Naive thymus-derived CD4-positive, alpha-beta T cell (primary cell): ENCODE measurements at regions of chr1 and their contacts with region 1.

Region 1: GRCh38 chr1:45583264-45583665 is 576 bp upstream of the NASP start:
- DNase-seq: peak; percentile 77 to 97 (median 95)
- ATAC-seq: peak; percentile 86
- H3K4me3 ChIP-seq: peak overlapping the region; percentile 98
- H3K4me3 Mint-ChIP-seq: peak overlapping the region; percentile 89 to 100 (median 99)
- H3K27ac ChIP-seq: peak overlapping the region; percentile 91
- H3K27ac Mint-ChIP-seq: peak overlapping the region; percentile 91 to 99 (median 98)
- H3K4me1 ChIP-seq: peaks cover 16 to 18% of the 10 kb centered on the region in 2 donors
- H3K4me1 Mint-ChIP-seq: peaks cover 20 to 37% (median 26%) of the 10 kb centered on the region in 7 donors
- H3K27me3 ChIP-seq: no peaks in the 10 kb centered on the region
- H3K27me3 Mint-ChIP-seq: no peaks in the 10 kb centered on the region

Region 2: GRCh38 chr1:44674113-44675000 is 908.9 kb before region 1 on chr1 and contains the starts of genes ARMH1 and TMEM53:
- CTCF ChIA-PET with region 1: no interaction called
- POLR2A ChIA-PET with region 1: no interaction called
- intact Hi-C with region 1: loop called in 1 of 2 experiments (anchors 1 kb)
- DNase-seq: peak; percentile 91 to 96 (median 95)
- ATAC-seq: peak; percentile 94
- H3K4me3 ChIP-seq: peak within 1 kb of the TSS; percentile 81
- H3K4me3 Mint-ChIP-seq: peak within 1 kb of the TSS; percentile 83 to 94 (median 91)
- H3K27ac ChIP-seq: peak within 1 kb of the TSS; percentile 76
- H3K27ac Mint-ChIP-seq: peak within 1 kb of the TSS; percentile 84 to 94 (median 91)
- H3K4me1 ChIP-seq: peaks cover 0 to 6% of the 10 kb centered on the region in 2 donors
- H3K4me1 Mint-ChIP-seq: peaks cover 13 to 34% (median 23%) of the 10 kb centered on the region in 7 donors
- H3K27me3 ChIP-seq: no peaks in the 10 kb centered on the region
- H3K27me3 Mint-ChIP-seq: no peaks in the 10 kb centered on the region
- total RNA-seq, gene ARMH1: 65.8 to 205 (median 87.0) TPM
- total RNA-seq, gene TMEM53: 1.6 to 3.5 (median 1.9) TPM

Region 3: DNA sequence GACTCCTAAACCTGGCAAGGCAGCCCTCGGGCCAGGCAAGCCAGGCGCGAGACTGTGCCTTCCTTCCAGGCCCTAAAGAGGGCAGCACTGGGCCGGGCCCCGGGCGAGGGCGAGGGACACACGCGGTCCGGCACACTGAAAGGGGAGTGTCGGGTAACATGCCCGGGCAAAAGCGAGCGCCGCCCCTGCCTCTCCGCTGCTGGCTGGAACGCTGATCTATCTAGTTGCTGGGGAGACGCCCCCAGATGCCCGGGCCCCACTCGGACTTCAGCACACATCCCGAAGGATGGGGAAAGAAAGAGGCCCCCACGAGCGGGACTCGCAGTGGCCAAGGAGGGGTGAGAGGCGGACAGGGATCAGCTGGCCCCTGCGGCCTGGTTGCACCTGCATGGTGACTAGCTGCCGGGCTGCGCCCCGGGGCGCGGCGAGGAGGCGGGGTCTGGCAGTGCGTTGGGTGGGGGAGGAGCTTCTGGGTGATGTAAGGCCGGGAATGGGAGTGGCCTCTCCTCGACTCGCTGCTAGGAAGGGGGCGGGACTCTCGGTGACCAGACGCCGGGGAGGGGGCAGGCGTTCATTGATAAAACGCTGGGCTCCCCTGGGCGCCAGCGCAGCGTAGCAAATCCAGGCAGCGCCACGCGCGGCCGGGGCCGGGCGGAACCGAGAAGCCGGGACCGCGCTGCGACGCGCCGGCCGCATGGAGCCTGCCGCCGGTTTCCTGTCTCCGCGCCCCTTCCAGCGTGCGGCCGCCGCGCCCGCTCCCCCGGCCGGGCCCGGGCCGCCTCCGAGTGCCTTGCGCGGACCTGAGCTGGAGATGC is 783.3 kb before region 1 on chr1 and contains the start of gene PLK3:
- CTCF ChIA-PET with region 1: interaction called, 3 read pairs
- POLR2A ChIA-PET with region 1: interaction called, 3 read pairs
- intact Hi-C with region 1: loop called (anchors 2 to 5 kb)
- DNase-seq: peak; percentile 93 to 99 (median 98)
- ATAC-seq: peak; percentile 92
- H3K4me3 ChIP-seq: peak within 1 kb of the TSS; percentile 66
- H3K4me3 Mint-ChIP-seq: peak within 1 kb of the TSS; percentile 85 to 98 (median 93)
- H3K27ac ChIP-seq: peak within 1 kb of the TSS; percentile 94
- H3K27ac Mint-ChIP-seq: peak within 1 kb of the TSS; percentile 84 to 99 (median 98)
- H3K4me1 ChIP-seq: peaks cover 17 to 24% of the 10 kb centered on the region in 2 donors
- H3K4me1 Mint-ChIP-seq: peaks cover 19 to 43% (median 33%) of the 10 kb centered on the region in 7 donors
- H3K27me3 ChIP-seq: no peaks in the 10 kb centered on the region
- H3K27me3 Mint-ChIP-seq: no peaks in the 10 kb centered on the region
- total RNA-seq, gene PLK3: 92.8 to 456 (median 142) TPM

Region 4: DNA sequence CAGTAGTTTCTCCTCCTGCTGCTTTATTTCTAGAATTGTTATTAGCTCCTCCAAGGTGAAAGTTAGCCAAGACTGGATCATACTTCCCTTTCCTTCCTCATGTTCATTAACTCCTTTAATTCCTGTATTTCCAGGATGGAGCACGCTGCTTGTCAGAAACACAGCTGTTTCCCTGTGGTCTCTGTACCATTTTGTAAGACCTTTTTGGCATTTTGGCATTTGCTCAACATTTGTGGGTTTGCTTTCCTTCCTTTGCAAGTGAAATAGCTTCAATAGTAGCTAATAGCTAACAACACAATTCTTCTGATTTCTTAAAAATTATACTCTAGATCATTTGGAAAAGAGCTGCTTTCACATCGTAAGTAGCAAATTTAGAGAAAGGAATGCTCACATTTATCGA is 300.9 kb before region 1 on chr1:
- CTCF ChIA-PET with region 1: no interaction called
- POLR2A ChIA-PET with region 1: no interaction called
- intact Hi-C with region 1: no loop called
- DNase-seq: no peak
- ATAC-seq: no peak
- H3K4me3 ChIP-seq: no peak overlapping the region
- H3K4me3 Mint-ChIP-seq: no peak overlapping the region
- H3K27ac ChIP-seq: no peak overlapping the region
- H3K27ac Mint-ChIP-seq: peak overlapping the region in 1 of 9 donors; percentile 35
- H3K4me1 ChIP-seq: no peaks in the 10 kb centered on the region
- H3K4me1 Mint-ChIP-seq: peaks cover 0 to 7% (median 0%) of the 10 kb centered on the region in 7 donors
- H3K27me3 ChIP-seq: no peaks in the 10 kb centered on the region
- H3K27me3 Mint-ChIP-seq: peaks cover 0 to 14% (median 4%) of the 10 kb centered on the region in 5 donors

Region 5: DNA sequence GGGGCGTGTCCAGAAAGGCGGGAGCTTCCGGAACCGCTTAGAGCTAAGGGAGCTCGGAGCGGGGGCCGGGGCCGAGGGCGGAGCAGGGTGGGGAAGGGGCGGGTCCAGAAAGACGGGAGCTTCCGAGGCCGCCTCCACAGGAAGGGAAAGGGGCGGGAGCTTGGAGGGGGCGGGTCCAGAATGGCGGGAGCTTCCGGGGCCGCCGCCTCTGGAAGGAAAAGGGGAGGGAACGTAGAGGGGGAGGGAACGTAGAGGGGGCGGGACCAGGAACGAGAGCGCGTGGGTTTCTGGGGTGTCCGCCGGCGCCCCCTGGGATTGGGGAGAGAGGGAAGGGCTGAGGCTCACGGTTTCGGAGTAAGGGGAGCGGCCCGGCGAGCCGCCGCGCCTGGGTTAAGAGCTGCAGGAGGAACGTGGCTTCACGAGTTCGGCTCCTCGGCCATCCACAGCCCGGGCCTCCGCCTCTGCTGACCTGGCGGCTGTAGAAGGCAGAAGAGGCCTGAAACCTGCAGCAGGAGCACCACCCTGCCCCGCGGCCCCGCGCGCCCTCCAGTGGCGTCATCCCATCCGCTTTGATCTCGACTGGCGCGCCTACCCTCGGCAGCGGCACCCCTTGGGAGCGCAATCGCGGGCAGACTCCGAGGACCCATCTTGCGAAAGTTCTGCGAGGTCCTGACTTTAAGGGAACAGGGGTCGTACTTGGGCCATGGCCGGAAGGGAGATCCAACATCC is 279.5 kb before region 1 on chr1:
- CTCF ChIA-PET with region 1: no interaction called
- POLR2A ChIA-PET with region 1: interaction called, 3 read pairs
- intact Hi-C with region 1: loop called (anchors 1 kb)
- DNase-seq: peak; percentile 86 to 96 (median 93)
- ATAC-seq: peak; percentile 94
- H3K4me3 ChIP-seq: peak overlapping the region; percentile 95
- H3K4me3 Mint-ChIP-seq: peak overlapping the region; percentile 89 to 96 (median 92)
- H3K27ac ChIP-seq: peak overlapping the region; percentile 88
- H3K27ac Mint-ChIP-seq: peak overlapping the region; percentile 90 to 97 (median 95)
- H3K4me1 ChIP-seq: peaks cover 7 to 9% of the 10 kb centered on the region in 2 donors
- H3K4me1 Mint-ChIP-seq: peaks cover 6 to 32% (median 26%) of the 10 kb centered on the region in 7 donors
- H3K27me3 ChIP-seq: no peaks in the 10 kb centered on the region
- H3K27me3 Mint-ChIP-seq: no peaks in the 10 kb centered on the region

Region 6: DNA sequence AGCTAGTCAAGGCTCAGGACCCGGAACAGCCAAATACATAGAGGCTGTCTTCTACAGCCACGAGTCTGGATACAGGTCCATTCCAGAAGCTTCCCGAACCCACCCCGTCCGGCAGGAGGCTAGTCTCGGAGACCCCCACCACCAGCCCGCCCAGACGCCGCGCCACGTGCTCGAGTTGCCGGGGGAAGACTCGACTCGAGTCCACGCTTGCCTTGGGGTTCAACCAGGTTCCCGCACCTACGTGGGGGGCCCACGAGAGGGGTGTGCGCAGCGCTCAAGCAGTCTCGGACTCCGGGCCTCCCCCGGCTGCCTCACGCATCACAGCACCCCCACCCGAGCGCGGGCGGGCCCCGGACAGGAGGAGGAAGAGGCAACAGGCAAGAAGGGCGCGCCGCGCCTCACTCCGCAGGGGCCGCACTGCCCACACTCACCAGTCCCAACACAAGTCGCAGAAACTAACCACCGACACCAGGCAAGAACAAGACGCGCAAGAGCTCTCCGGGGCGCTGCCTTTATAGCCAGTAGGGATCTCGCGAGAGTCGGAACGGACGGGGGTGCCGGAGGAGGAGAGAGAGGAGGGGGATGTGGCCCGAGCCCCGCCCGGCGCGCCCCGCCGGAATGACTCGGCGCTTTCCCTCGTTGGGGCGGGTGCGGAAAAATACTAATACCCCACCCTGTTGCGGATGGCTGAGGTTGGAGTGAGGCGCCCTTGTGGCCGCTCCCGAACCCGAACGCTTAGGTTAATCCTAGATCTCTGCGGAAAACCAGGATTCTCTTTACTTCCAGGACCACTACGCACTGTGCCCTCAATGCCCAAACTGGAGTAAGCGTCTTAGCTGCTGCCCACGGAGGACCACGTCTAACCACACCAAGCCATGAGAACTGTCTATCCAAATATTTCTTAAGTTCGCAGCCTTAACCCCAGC is 61.6 kb before region 1 on chr1 and contains the start of gene PRDX1:
- CTCF ChIA-PET with region 1: no interaction called
- POLR2A ChIA-PET with region 1: interaction called, 33 read pairs
- intact Hi-C with region 1: loop called (anchors 1 kb)
- DNase-seq: peak; percentile 91 to 99 (median 93)
- ATAC-seq: peak; percentile 95
- H3K4me3 ChIP-seq: peak within 1 kb of the TSS; percentile 94
- H3K4me3 Mint-ChIP-seq: peak within 1 kb of the TSS; percentile 90 to 99 (median 94)
- H3K27ac ChIP-seq: peak within 1 kb of the TSS; percentile 87
- H3K27ac Mint-ChIP-seq: peak within 1 kb of the TSS; percentile 83 to 96 (median 91)
- H3K4me1 ChIP-seq: peaks cover 7 to 8% of the 10 kb centered on the region in 2 donors
- H3K4me1 Mint-ChIP-seq: peaks cover 14 to 56% (median 32%) of the 10 kb centered on the region in 7 donors
- H3K27me3 ChIP-seq: no peaks in the 10 kb centered on the region
- H3K27me3 Mint-ChIP-seq: peaks cover 0 to 12% (median 0%) of the 10 kb centered on the region in 5 donors
- total RNA-seq, gene PRDX1: 28.8 to 369 (median 96.3) TPM

Region 7: GRCh38 chr1:45803301-45803780 is 220.1 kb after region 1 on chr1 and contains the start of gene MAST2:
- CTCF ChIA-PET with region 1: no interaction called
- POLR2A ChIA-PET with region 1: no interaction called
- intact Hi-C with region 1: loop called (anchors 1 kb)
- DNase-seq: peak; percentile 53 to 95 (median 71)
- ATAC-seq: peak; percentile 98
- H3K4me3 ChIP-seq: peak within 1 kb of the TSS; percentile 65
- H3K4me3 Mint-ChIP-seq: peak within 1 kb of the TSS; percentile 87 to 100 (median 92)
- H3K27ac ChIP-seq: peak within 1 kb of the TSS; percentile 41
- H3K27ac Mint-ChIP-seq: peak within 1 kb of the TSS; percentile 10 to 87 (median 77)
- H3K4me1 ChIP-seq: peaks cover 0 to 7% of the 10 kb centered on the region in 2 donors
- H3K4me1 Mint-ChIP-seq: peaks cover 21 to 33% (median 26%) of the 10 kb centered on the region in 7 donors
- H3K27me3 ChIP-seq: no peaks in the 10 kb centered on the region
- H3K27me3 Mint-ChIP-seq: no peaks in the 10 kb centered on the region
- total RNA-seq, gene MAST2: 4.9 to 22.7 (median 7.1) TPM